Activated CD4-positive, alpha-beta T cell treated with anti-CD3 and anti-CD28 coated beads, Interleukin-2, amount 10 ng/mL, durations not matched to agents 24 days and 14 days (primary cell): ENCODE measurements at regions of chr12 and their contacts with region 1.

Region 1: DNA sequence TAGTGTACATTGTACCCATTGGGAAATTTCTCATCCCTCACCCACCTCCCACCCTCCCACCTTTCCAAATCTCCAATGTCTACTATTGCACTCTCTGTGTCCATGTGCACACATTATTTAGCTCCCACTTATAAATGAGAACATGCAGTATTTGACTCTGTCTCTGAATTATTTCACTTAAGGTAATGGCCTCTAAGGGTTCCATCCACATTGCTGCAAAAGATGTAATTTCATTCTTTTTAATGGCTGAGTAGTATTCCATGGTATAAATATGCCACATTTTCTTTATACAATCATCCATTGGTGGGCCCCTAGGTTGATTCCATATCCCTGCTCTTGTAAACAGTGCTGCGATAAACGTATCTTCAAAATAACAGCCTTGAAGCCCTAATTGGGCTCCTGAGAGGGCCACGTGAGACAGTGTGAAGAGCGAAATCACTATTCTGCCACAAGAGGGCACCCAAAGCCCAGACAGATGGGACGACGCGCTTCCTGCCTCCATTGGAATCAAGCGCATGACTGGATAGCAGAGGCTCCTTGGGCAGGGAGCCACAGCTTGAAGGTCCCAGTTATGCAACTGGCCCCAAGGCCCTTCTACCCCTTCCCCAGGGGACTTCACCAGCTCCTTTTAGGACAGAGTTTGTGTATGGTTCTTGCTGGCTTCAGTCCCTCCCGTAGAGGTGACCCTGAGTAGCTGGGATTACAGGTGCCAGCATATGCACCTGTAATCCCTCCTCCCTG is 21.3 kb upstream of the CD27 start:
- DNase-seq: peak; percentile 93
- H3K4me3 Mint-ChIP-seq: peak overlapping the region; percentile 17
- H3K27ac Mint-ChIP-seq: peak overlapping the region; percentile 84
- H3K4me1 Mint-ChIP-seq: peaks cover 40% of the 10 kb centered on the region
- H3K27me3 Mint-ChIP-seq: no peaks in the 10 kb centered on the region

Region 2: DNA sequence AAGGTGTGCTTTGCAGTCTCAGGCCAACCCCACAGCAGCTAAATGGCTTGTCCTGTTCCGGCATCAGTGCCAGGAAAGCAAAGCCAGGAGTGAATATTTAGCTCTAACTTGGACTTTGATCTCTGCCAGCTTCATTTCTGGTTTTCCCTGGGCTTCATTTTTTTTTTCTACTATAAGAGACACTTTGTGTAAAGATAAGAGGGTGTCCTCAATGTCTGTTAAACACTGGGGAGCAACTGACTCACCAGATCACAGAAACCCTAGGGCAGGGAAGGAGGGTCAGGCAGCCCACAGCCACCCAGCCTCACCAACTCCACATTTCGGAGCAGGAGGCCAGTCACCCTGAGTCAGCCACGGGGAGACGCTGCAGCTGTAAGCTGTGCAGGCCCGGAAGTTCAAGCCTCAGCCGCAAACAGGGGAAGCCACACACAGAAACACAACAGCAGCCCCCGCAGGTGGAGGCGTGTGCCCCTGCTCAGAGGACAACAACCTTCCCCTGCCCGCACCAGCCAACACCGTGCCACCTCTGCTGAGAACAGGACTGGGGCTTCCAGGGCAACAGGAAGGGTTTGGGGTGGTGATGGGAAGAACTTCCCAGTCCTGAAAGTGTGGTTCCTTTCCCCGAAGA is 87.9 kb before region 1 on chr12:
- intact Hi-C with region 1: loop called (anchors 5 kb)
- DNase-seq: peak; percentile 94
- H3K4me3 Mint-ChIP-seq: no peak overlapping the region
- H3K27ac Mint-ChIP-seq: no peak overlapping the region
- H3K4me1 Mint-ChIP-seq: peaks cover 41% of the 10 kb centered on the region
- H3K27me3 Mint-ChIP-seq: no peaks in the 10 kb centered on the region

Region 3: DNA sequence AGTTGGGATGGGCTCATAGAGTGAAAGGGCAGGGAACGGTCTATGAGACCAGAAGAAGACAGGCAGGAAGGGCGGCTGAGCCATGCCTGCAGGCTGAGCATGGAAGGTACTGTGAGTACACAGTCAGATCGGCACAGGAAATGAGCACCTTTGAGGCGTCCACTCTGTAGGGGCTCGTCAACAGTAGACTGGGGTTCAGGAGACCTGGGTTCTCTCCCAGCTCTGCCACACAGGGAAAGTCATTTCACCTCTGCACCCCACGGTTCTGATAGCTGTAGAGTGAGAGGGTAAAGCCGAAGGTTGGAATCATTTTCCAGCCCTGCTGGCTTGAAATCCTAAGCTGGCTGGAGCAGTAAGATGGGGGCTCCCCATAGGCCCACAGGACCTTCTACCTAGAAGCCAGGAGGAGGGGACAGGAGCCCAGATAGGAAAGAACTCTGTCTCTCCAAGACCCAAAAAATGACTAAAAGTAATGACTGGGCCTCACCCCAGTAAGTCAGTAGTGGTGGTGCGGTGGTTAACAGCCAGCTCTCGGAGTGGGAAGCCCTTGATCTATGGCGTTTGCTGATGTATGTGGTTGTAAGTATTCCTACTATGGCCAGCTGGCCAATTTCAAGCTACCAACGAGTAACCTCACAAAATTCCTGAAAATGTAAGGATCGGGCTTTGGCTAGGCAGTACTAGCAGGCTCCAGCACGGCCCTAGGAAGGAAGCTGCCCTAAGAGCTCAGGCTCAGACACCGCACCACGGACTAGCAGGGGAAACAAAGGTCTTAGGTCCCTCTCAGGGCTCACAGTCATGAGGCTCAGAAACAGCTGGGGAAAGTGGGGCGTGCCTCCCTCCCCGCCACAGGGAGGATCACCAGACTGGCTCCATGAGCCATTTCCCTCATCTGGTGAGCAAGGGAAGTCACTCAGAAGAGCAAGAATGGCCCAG is 11.0 kb after region 1 on chr12:
- intact Hi-C with region 1: no loop called
- DNase-seq: peak; percentile 85
- H3K4me3 Mint-ChIP-seq: peak overlapping the region; percentile 34
- H3K27ac Mint-ChIP-seq: peak overlapping the region; percentile 77
- H3K4me1 Mint-ChIP-seq: peaks cover 55% of the 10 kb centered on the region
- H3K27me3 Mint-ChIP-seq: no peaks in the 10 kb centered on the region

Region 4: GRCh38 chr12:6451348-6452244 is 28.2 kb after region 1 on chr12 and contains the start of gene TAPBPL:
- intact Hi-C with region 1: loop called (anchors 1 kb)
- DNase-seq: peak; percentile 94
- H3K4me3 Mint-ChIP-seq: peak within 1 kb of the TSS; percentile 97
- H3K27ac Mint-ChIP-seq: peak within 1 kb of the TSS; percentile 97
- H3K4me1 Mint-ChIP-seq: peaks cover 66% of the 10 kb centered on the region
- H3K27me3 Mint-ChIP-seq: no peaks in the 10 kb centered on the region
- total RNA-seq, gene TAPBPL: 31.9 and 33.0 TPM in 2 replicates

Region 5: GRCh38 chr12:6470375-6471163 is 47.1 kb after region 1 on chr12 and contains the start of gene VAMP1:
- intact Hi-C with region 1: loop called (anchors 1 kb)
- DNase-seq: peak; percentile 99
- H3K4me3 Mint-ChIP-seq: peak within 1 kb of the TSS; percentile 94
- H3K27ac Mint-ChIP-seq: peak within 1 kb of the TSS; percentile 91
- H3K4me1 Mint-ChIP-seq: peaks cover 52% of the 10 kb centered on the region
- H3K27me3 Mint-ChIP-seq: peaks cover 1% of the 10 kb centered on the region
- total RNA-seq, gene VAMP1: 50.0 and 51.2 TPM in 2 replicates

Region 6: GRCh38 chr12:6533923-6534694 is 110.7 kb after region 1 on chr12 and contains the start of gene GAPDH:
- intact Hi-C with region 1: loop called (anchors 1 kb)
- DNase-seq: peak; percentile 97
- H3K4me3 Mint-ChIP-seq: peak within 1 kb of the TSS; percentile 92
- H3K27ac Mint-ChIP-seq: peak within 1 kb of the TSS; percentile 99
- H3K4me1 Mint-ChIP-seq: peaks cover 41% of the 10 kb centered on the region
- H3K27me3 Mint-ChIP-seq: no peaks in the 10 kb centered on the region
- total RNA-seq, gene GAPDH: 4,585 and 4,599 TPM in 2 replicates

Region 7: DNA sequence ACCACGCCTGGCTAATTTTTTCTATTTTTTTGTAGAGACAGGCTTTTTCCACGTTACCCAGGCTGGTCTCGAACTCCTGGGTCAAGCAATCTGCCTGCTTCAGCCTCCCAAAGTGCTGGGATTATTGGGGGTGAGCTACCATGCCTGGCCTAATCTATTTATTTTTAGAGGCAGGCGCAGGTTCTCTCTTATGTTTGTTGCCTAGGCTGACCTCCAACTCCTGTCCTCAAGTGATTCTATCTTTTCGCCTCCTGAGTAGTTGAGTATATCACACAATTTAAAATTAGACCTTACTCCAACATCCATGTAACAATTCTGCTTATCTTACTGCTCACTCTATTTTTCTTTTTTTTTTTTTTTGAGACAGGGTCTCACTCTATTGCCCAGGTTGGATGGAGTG is 230.6 kb after region 1 on chr12:
- intact Hi-C with region 1: no loop called
- DNase-seq: no peak
- H3K4me3 Mint-ChIP-seq: no peak overlapping the region
- H3K27ac Mint-ChIP-seq: no peak overlapping the region
- H3K4me1 Mint-ChIP-seq: no peaks in the 10 kb centered on the region
- H3K27me3 Mint-ChIP-seq: no peaks in the 10 kb centered on the region